Breast epithelium (tissue), 4 donors: ENCODE measurements at regions of chr13 and their contacts with region 1.

Region 1: DNA sequence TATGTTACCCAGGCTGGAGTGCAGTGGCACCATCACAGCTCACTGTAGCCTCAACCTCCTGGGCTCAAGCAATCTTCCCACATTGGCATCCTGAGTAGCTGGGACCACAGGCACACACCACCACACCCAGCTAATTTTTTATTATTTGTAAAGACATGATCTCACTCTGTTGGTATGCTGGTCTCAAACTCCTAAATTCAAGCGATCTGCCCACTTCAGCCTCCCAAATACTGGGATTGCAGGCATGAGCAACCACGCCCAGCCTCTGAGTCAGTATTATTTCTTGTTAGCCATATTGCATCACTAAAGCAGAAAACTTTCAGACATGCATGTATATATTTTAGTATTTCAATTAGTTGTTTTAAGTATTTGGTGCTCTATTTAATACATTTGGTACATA is 376.4 kb downstream of the GPC6 start:
- DNase-seq: no peak
- H3K4me3 ChIP-seq: no peak overlapping the region
- H3K27ac ChIP-seq: no peak overlapping the region
- H3K4me1 ChIP-seq: no peaks in the 10 kb centered on the region
- H3K27me3 ChIP-seq: no peaks in the 10 kb centered on the region
- CTCF ChIP-seq: no peak
- POLR2A ChIP-seq: no peak

Region 2: DNA sequence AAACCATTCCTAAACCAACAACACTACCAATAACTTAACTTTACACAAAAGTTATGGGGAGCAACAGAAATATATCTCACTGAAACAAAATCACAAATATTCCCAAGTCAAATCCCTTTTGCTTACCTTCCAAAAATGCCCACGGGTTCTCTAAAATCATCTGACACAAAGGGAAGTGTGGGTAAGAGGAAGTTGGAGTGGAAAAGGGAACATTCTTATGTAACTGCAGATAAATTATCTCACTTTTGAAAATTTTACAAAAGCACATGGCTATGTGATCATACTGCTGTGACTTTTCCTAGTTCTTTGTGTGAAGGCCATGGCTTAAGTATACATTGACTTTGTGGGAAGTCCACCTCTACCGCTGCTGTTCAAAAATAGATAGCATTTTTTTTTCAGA is 25.9 kb before region 1 on chr13:
- intact Hi-C with region 1: no loop called
- DNase-seq: no peak
- H3K4me3 ChIP-seq: no peak overlapping the region
- H3K27ac ChIP-seq: no peak overlapping the region
- H3K4me1 ChIP-seq: no peaks in the 10 kb centered on the region
- H3K27me3 ChIP-seq: no peaks in the 10 kb centered on the region
- CTCF ChIP-seq: no peak
- POLR2A ChIP-seq: no peak

Region 3: DNA sequence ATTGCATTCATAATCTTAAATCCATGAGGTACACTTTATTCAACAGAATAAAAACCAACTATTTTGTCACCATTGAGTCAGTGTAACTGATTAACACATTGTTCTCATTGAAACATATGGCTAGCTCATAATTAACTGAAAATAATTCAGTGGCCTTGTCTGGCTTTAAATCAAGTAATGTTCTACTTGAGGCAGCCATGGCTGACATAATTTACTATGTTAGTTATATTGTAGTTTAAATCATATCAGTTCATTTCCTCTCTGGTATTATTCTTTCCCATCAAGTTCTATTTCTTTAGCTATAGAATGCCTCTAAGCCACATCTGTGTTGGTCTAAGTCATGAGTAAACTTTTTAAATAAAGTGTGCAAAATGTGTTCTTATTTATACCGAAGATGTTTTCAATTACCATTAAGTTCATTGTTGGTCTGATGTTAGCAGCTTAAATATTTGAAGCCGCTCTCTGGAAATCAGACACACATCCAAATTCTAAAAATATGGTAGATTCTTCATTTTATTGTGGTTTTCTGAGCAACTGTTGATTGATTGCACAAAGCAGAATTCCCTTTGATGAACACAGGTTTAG is 17.2 kb after region 1 on chr13:
- intact Hi-C with region 1: no loop called
- DNase-seq: no peak
- H3K4me3 ChIP-seq: no peak overlapping the region
- H3K27ac ChIP-seq: no peak overlapping the region
- H3K4me1 ChIP-seq: no peaks in the 10 kb centered on the region
- H3K27me3 ChIP-seq: no peaks in the 10 kb centered on the region
- CTCF ChIP-seq: no peak
- POLR2A ChIP-seq: no peak

Region 4: DNA sequence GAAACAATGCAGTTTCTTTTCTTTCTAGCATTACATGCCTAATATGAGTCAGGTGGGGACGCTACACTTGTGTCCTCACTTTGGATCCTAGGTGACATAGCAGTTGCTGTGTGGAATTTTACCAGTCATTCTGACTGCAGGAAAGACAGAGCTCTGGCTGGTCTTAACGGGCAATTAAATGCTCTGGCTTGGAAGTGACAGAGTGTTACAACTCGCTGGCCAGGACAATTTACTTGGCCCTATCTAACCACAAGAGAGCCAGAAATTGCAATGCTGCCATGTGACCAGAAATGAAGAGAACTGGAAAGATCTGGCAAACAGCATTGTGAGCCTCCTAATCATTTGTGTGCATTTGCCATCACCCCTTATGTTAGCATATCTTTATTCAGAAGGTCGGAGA is 525.4 kb after region 1 on chr13:
- intact Hi-C with region 1: loop called (anchors 5 kb)
- DNase-seq: no peak
- H3K4me3 ChIP-seq: no peak overlapping the region
- H3K27ac ChIP-seq: no peak overlapping the region
- H3K4me1 ChIP-seq: no peaks in the 10 kb centered on the region
- H3K27me3 ChIP-seq: no peaks in the 10 kb centered on the region
- CTCF ChIP-seq: no peak
- POLR2A ChIP-seq: no peak